ENCODE measurements at regions of chr1 and their contacts with region 1.

Region 1: DNA sequence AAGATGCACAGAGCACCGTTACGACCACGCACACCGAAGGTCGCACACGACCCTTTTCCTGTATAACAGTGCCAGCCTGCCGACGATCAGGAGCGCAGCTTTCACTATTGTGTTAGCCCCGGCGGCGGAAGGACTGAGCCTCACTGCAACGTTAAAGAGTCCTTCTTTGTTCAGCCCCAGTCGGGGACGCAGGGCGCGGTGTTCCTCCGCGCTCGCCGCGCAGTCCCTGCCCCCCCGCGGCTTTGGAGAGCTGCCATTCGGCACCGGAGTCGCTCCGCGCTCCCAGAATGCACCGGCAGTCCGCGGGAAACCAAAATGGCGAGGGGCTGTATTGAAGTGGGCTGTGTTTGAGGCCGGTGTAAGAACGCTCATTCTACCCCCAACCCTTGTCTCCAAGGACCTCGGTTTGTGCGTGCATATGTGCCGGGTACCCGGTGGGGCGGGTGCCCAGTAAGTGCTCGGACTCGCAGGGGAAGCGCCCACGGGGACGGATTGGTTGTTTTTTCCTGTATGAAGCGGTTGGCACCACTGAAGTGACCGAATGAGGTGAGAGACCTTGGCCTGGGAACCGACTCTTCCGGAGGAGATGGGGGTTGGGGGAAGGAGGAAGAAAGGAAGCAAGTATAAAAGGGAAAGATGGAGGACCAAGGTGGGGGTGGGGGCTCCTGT is at the start of gene MTF2:
- DNase-seq: peak; percentile 89
- ATAC-seq: peak; percentile 90
- H3K4me3 Mint-ChIP-seq: peak within 1 kb of the TSS; percentile 96
- H3K27ac Mint-ChIP-seq: peak within 1 kb of the TSS; percentile 97
- H3K4me1 Mint-ChIP-seq: peaks cover 54% of the 10 kb centered on the region
- H3K27me3 Mint-ChIP-seq: no peaks in the 10 kb centered on the region
- CTCF ChIP-seq: no peak
- total RNA-seq, gene MTF2: 49.1 and 59.7 TPM in 2 replicates

Region 2: DNA sequence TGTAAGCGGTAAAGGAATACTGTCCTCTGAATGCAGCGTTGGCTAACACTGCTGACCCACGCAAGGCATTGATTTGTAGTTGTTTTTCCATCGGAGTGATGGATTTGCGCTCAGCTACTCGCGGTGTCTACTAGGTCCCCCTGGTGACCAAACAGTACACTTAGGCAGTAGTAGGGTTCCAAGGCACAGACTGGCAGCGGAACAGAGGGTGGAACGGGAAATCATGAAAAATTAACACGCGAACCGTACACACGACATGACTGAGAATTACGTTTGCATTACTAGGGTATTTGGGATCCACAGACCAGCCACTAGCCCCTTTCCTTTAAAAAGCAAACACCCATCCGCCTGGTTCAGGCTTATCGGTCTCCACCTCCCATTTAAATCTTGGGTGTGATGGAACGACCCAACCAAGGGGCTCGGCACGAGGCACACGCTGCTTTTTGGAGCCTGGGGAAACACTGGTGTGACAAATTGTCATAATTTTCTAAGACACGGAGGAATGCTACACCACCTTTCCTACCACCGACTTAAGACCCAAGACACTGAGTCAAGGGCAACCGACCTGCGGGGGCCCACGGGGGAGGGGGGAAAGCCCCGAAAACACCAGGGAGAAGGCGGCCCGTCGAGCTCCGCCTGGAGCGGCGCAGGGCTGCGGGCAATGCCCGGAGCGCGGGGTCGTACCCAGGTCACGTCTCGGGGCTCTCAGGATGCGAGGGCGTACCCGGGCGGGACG is 118.6 kb before region 1 on chr1:
- CTCF ChIA-PET with region 1: interaction called, 3 read pairs
- POLR2A ChIA-PET with region 1: interaction called, 22 read pairs
- intact Hi-C with region 1: loop called (anchors 1 kb)
- DNase-seq: no peak
- ATAC-seq: peak; percentile 49
- H3K4me3 Mint-ChIP-seq: peak overlapping the region; percentile 96
- H3K27ac Mint-ChIP-seq: peak overlapping the region; percentile 98
- H3K4me1 Mint-ChIP-seq: peaks cover 46% of the 10 kb centered on the region
- H3K27me3 Mint-ChIP-seq: no peaks in the 10 kb centered on the region
- CTCF ChIP-seq: no peak

Region 3: DNA sequence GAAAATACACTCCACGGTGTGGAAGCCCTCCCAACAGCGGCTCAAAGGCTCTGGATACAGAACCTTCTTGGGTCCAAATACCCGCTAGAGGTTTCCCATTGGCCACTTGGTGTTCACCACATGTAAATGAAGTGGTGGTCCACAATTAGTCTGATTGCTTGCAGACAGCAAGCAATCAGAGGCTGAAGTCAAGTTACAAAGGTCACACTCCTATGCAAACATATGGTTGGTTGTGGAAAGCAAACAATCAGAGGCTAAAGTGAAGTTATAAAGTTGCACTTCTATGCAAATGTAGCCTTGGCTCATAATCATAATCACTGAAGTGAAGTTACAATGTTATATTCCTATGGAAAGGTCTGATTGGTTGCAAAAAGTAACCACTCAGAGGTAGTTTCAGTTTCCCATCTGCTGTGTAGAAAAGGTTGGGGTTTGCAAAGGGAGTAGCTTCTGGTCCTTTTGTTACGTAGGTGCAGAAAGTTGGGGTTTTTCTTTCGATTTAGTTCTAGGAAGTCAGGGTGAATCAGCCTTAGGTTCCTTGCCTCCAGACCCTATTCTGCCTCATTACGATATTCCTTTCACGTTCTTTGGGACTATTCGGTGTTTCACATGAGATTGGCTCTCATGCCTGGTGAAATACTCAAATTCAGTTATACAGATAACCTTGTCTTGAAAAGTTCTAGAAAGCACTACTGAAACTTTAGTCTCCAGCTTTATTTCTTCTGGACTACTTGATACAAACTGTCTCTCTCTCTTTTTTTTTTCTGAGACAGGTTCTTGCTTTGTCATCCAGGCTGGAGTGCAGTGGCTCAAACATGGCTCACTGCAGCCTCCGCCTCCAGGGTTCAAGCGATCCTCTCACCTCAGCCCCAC is 36.7 kb before region 1 on chr1:
- CTCF ChIA-PET with region 1: no interaction called
- POLR2A ChIA-PET with region 1: interaction called, 4 read pairs
- intact Hi-C with region 1: loop called (anchors 2 kb)
- DNase-seq: no peak
- ATAC-seq: peak; percentile 88
- H3K4me3 Mint-ChIP-seq: peak overlapping the region; percentile 75
- H3K27ac Mint-ChIP-seq: peak overlapping the region; percentile 80
- H3K4me1 Mint-ChIP-seq: peaks cover 24% of the 10 kb centered on the region
- H3K27me3 Mint-ChIP-seq: no peaks in the 10 kb centered on the region
- CTCF ChIP-seq: no peak

Region 4: DNA sequence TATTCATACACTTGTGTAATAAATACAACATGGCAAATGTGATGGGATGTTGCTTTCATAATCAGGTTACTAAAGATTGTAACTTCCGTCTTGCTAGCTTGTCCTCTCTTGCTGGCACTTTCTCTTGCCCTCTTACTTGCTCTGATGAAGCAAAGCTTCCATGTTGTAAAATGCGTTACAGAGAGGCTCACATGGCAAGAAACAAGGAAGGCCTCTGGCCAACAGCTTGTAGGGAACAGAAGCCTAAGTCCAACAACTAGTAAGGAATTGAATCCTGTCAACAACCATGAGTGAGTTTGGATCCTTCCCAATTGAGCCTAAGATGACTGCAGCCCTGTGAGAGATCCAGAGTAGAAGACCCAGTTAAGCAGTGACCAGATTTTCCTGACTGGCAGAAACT is 85.7 kb after region 1 on chr1:
- CTCF ChIA-PET with region 1: interaction called, 5 read pairs
- POLR2A ChIA-PET with region 1: no interaction called
- intact Hi-C with region 1: loop called (anchors 5 kb)
- DNase-seq: no peak
- ATAC-seq: no peak
- H3K4me3 Mint-ChIP-seq: no peak overlapping the region
- H3K27ac Mint-ChIP-seq: no peak overlapping the region
- H3K4me1 Mint-ChIP-seq: peaks cover 42% of the 10 kb centered on the region
- H3K27me3 Mint-ChIP-seq: no peaks in the 10 kb centered on the region
- CTCF ChIP-seq: no peak

Region 5: DNA sequence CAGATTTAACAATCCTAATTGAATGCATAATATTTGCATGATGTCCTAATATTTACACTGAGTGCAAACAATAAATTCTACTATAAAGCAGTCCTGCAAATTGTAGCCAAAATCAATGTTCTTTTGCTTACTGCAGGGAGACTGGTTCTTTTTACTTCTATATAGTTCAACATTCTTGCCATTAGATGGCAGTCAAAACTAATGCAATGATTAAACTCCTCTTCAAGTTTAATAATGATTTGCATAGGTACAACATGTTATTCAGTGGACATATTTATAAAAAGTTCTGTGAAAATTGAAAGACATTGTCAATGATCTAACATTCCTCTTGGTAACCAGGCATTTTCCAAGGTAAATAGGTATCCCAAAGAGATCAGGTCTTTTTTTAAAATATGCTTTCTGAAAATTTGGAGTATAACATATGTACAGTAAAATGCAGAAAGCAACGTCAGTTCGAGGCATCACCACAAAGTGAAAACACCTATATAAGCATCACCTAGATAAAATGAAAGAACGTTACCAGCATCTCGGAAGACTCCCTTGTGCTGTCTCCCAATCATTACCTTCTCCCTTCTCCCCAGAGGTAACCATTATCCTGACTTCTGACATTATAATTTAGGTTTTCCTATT is 359.0 kb after region 1 on chr1:
- CTCF ChIA-PET with region 1: no interaction called
- POLR2A ChIA-PET with region 1: no interaction called
- intact Hi-C with region 1: loop called (anchors 10 kb)
- DNase-seq: no peak
- ATAC-seq: peak; percentile 76
- H3K4me3 Mint-ChIP-seq: no peak overlapping the region
- H3K27ac Mint-ChIP-seq: no peak overlapping the region
- H3K4me1 Mint-ChIP-seq: peaks cover 3% of the 10 kb centered on the region
- H3K27me3 Mint-ChIP-seq: peaks cover 3% of the 10 kb centered on the region
- CTCF ChIP-seq: no peak

Measured in activated B cell treated with CpG ODN at 0.5 μM for 24 hours (primary cell).